Activated naive CD4-positive, alpha-beta T cell treated with anti-CD3 and anti-CD28 coated beads for 36 hours (primary cell): ENCODE measurements at regions of chr2 and their contacts with region 1.

Region 1: DNA sequence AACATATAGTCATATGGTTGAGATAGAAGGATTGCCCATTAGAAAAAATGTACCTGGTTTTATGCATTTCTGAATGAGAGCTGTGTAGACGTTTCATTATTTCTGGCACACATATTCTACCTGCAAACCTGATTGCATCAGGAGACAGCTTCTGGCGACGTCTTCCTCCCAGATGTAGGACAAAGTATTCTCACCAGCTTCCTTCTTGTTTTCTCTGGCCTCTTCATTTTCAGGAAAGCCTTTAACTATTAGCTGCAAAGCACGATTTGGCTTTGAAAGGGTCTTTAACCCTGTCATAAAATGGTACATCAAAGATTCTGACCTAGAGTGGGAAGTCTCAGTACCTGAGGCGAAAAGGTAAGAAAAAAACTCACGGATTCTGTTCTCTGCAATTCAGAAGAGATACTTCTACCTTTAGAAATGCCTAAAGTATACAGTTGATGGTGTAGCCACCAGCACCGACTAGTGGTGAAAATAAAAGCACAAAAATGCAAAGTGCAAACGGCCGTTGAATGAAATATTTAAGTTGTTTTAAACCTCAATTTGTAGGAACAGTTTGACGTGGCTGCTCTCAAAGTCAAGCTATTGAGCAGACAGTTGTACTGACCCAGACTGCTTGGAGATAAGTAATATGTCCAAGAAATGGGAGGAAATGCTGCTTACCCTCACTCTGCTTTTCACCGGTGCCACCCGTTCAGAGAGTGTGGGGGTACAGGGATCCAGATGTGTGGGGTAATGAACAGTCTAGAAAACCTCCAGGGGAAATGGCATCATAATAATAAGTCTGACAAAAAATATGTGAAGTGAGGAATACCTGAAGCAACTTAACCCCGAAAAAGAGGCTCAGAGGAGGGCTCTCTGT is 20.2 kb downstream of the IL18RAP start:
- DNase-seq: peak; percentile 74
- H3K4me3 Mint-ChIP-seq: no peak overlapping the region
- H3K27ac Mint-ChIP-seq: peak overlapping the region; percentile 34
- H3K4me1 Mint-ChIP-seq: peaks cover 10% of the 10 kb centered on the region
- H3K27me3 Mint-ChIP-seq: no peaks in the 10 kb centered on the region

Region 2: DNA sequence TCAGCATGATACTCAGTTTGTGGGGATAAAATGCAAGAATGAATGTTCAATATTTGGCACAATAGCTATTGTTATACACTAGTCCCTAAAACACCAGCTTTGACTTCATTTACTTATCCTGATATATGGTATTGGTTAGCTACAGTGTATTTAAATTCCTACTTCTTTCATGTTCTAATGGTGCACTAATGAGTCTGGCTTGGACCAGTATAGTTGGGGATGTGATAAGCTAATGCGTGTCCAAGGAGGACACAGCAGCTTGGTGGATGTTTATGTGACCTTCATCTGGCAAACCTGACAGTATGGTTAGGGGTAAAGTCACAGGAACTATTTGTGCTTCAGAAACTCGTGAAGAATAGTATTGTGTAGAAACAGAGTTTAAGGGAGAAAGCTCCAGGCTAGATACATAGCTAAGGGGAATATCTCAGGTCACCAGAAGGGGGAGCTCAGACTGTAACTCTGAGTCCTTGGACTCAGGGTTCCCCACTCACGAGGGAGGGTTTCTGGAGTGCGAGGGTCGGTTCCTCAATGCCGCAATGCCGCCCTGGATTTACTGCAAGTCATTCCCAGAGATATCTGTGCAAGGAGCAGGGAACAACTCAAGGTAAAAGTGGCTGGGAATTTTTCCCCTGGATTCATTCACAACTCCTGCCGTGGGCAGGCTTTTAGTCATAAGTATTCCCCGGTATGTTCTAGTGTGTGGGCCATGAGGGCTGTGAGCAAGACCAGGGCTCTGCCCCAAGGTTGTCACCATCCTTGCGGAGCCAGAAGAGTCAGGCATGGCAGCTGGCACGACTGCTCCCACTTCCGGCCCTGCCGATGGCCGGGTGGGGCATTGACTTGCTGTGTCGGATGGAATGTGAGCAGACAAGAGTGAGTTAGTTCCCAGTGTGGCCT is 437.0 kb before region 1 on chr2:
- CTCF ChIA-PET with region 1: interaction called, 11 read pairs
- intact Hi-C with region 1: no loop called
- DNase-seq: peak; percentile 68
- H3K4me3 Mint-ChIP-seq: no peak overlapping the region
- H3K27ac Mint-ChIP-seq: no peak overlapping the region
- H3K4me1 Mint-ChIP-seq: peaks cover 19% of the 10 kb centered on the region
- H3K27me3 Mint-ChIP-seq: no peaks in the 10 kb centered on the region

Region 3: GRCh38 chr2:102187496-102188150 is 255.6 kb before region 1 on chr2:
- CTCF ChIA-PET with region 1: no interaction called
- intact Hi-C with region 1: loop called (anchors 2 kb)
- DNase-seq: peak; percentile 67
- H3K4me3 Mint-ChIP-seq: peak overlapping the region; percentile 70
- H3K27ac Mint-ChIP-seq: peak overlapping the region; percentile 57
- H3K4me1 Mint-ChIP-seq: peaks cover 21% of the 10 kb centered on the region
- H3K27me3 Mint-ChIP-seq: peaks cover 28% of the 10 kb centered on the region

Region 4: DNA sequence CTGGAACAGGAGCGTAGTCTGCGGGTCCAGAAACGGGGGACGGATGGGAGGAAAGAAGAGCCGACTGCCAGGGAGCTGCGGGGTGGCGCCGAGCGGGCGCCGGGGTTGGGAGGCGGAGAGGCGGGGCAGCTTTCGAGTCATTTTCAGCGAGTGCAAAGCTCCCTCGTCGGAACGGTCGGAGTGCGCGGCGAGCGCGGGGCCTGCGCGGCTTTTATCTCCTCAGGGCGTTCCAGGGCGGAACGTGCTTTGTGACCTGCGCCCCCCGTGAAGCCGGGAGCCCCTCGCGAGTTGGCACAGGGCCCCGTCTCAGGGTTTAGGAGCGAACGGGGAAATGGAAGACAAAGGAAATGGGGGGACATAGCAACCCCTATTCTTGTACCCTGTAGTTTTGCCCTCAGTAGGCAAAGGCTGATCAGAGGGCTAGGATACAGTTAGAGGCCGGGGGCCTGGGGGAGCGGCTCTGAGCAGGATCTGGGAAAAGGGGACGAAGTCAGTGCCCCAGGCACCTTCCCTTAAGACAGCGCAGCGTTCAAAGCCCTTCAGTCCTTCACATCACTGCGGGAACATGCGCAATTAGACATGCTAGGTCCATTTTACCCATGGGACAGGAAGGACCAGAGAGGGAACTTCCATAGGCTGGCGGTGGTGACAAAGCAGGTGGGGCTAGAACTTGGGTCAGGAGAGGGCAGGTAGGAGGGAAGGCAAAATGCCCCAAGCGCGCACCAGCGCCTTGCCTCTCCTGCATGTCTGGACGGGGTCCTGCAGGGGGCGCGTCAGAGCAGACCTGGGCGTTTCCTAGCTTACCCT is 192.0 kb before region 1 on chr2:
- CTCF ChIA-PET with region 1: interaction called, 21 read pairs
- intact Hi-C with region 1: loop called (anchors 1 kb)
- DNase-seq: peak; percentile 82
- H3K4me3 Mint-ChIP-seq: peak overlapping the region; percentile 77
- H3K27ac Mint-ChIP-seq: peak overlapping the region; percentile 69
- H3K4me1 Mint-ChIP-seq: peaks cover 37% of the 10 kb centered on the region
- H3K27me3 Mint-ChIP-seq: peaks cover 3% of the 10 kb centered on the region

Region 5: DNA sequence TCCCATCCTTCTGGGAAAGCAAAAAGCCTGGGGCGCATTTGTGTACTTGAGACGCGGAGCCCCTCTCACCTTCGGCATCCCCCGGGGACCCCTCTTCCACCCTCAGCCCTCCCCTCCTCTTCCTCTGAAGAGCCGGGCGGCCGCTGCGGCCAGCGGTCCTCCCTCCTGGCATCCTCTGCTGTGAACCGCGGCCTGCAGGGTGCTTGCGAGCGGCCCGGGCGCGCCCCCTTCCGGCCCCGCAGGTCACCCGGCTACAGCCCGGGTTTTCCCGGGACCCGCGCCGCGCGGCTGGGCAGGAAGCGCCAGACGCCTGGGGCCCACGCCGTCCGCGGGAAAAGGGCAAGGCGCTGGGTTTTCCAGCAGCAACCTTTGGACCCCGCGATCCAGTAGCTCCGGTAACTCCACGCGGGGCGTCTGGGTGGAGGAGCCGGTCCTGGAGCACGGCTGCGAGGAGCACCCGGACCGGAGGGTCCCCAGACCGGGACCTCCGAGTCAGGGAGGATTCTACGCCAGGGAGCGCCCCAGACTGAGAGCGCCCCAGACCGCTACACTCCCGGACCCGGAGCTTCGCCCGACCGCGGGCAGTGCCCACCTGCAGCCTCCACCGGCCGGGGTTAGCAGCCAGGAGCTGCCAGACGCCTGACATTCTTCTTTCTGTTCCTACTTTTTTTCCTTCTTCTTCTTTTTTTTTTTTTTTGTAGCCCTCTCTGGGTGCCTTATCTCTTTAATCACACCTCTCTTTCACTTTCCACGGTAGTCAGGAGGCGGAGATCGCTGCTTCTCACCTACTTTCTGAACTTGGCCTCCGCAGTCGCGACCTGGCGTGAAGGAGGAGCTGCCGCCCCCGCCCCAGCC is 87.4 kb before region 1 on chr2 and contains the start of gene IL18R1:
- CTCF ChIA-PET with region 1: interaction called, 49 read pairs
- intact Hi-C with region 1: loop called (anchors 1 kb)
- DNase-seq: peak; percentile 74
- H3K4me3 Mint-ChIP-seq: peak within 1 kb of the TSS; percentile 99
- H3K27ac Mint-ChIP-seq: peak within 1 kb of the TSS; percentile 96
- H3K4me1 Mint-ChIP-seq: peaks cover 45% of the 10 kb centered on the region
- H3K27me3 Mint-ChIP-seq: no peaks in the 10 kb centered on the region
- total RNA-seq, gene IL18R1: 17.1 to 18.4 TPM